ENCODE measurements at regions of chr10 and their contacts with region 1.

Region 1: GRCh38 chr10:5609952-5610616 is 56.3 kb downstream of the ASB13 start:
- DNase-seq: no peak
- ATAC-seq: peak; percentile 8 to 62 (median 42)
- H3K4me3 ChIP-seq: no peak overlapping the region
- H3K27ac ChIP-seq: peak overlapping the region in 2 of 4 donors; percentile 6 to 52
- H3K4me1 ChIP-seq: peaks cover 0 to 9% (median 0%) of the 10 kb centered on the region in 3 donors
- H3K27me3 ChIP-seq: no peaks in the 10 kb centered on the region
- CTCF ChIP-seq: no peak

Region 2: GRCh38 chr10:5466418-5467154 is 143.5 kb before region 1 on chr10:
- intact Hi-C with region 1: loop called in 1 of 3 experiments (anchors 10 kb)
- DNase-seq: peak in 5 of 6 donors; percentile 81 to 87 (median 84)
- ATAC-seq: peak; percentile 93 to 95 (median 94)
- H3K4me3 ChIP-seq: no peak overlapping the region
- H3K27ac ChIP-seq: peak overlapping the region; percentile 37 to 74 (median 56)
- H3K4me1 ChIP-seq: peaks cover 8 to 11% (median 10%) of the 10 kb centered on the region in 3 donors
- H3K27me3 ChIP-seq: no peaks in the 10 kb centered on the region
- CTCF ChIP-seq: no peak